ENCODE measurements at regions of chr3 and their contacts with region 1.

Region 1: GRCh38 chr3:179147873-179148615 is at the start of gene PIK3CA:
- DNase-seq: peak; percentile 90
- H3K4me3 Mint-ChIP-seq: peak within 1 kb of the TSS; percentile 93
- H3K27ac Mint-ChIP-seq: peak within 1 kb of the TSS; percentile 97
- H3K4me1 Mint-ChIP-seq: peaks cover 38% of the 10 kb centered on the region
- H3K27me3 Mint-ChIP-seq: peaks cover 23% of the 10 kb centered on the region
- total RNA-seq, gene PIK3CA: 18.9 and 19.7 TPM in 2 replicates

Region 2: GRCh38 chr3:178950676-178951075 is 197.4 kb before region 1 on chr3:
- intact Hi-C with region 1: no loop called
- DNase-seq: no peak
- H3K4me3 Mint-ChIP-seq: no peak overlapping the region
- H3K27ac Mint-ChIP-seq: no peak overlapping the region
- H3K4me1 Mint-ChIP-seq: no peaks in the 10 kb centered on the region
- H3K27me3 Mint-ChIP-seq: no peaks in the 10 kb centered on the region

Region 3: DNA sequence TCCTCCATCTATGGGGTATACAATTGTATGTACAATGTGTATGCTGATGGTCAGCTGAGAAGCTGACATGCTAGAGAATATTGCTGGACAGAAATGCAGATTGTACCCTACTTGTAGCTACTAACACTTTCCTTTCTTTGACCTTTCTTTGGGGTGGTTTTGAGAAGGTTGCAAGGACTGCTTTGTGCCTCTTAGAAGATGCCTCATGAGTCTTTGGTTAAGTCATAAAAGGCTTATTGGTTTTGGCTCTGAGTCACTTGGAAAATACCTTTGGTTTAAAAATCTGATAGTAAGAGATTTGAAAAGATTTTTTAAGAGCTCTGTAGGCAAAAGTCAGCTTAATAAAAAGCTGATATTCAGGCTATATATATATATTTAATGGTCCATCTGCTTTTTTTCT is 147.9 kb before region 1 on chr3:
- intact Hi-C with region 1: loop called (anchors 1 kb)
- DNase-seq: no peak
- H3K4me3 Mint-ChIP-seq: peak overlapping the region; percentile 37
- H3K27ac Mint-ChIP-seq: peak overlapping the region; percentile 45
- H3K4me1 Mint-ChIP-seq: peaks cover 19% of the 10 kb centered on the region
- H3K27me3 Mint-ChIP-seq: peaks cover 11% of the 10 kb centered on the region

Region 4: DNA sequence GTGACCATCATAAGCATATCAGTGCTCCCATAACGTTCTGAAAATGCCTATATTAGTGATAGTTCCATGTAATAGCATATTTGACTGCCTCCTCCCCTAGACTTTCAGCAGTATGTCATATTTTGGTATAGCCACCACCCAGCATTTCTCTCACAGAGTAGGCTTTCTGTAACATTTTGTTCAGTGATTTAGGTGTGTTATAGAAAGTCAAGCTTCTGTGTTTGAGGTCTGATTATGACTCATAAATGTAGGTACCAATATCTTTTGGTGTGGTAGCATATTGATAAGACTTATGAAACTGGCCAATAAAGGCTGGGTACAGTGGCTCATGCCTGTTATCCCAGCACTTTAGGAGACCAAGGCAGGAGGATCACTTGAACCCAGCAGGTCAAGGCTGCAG is 42.2 kb before region 1 on chr3:
- intact Hi-C with region 1: loop called (anchors 1 kb)
- DNase-seq: no peak
- H3K4me3 Mint-ChIP-seq: no peak overlapping the region
- H3K27ac Mint-ChIP-seq: no peak overlapping the region
- H3K4me1 Mint-ChIP-seq: no peaks in the 10 kb centered on the region
- H3K27me3 Mint-ChIP-seq: peaks cover 5% of the 10 kb centered on the region

Region 5: GRCh38 chr3:179133575-179133974 is 14.5 kb before region 1 on chr3:
- intact Hi-C with region 1: no loop called
- DNase-seq: no peak
- H3K4me3 Mint-ChIP-seq: no peak overlapping the region
- H3K27ac Mint-ChIP-seq: no peak overlapping the region
- H3K4me1 Mint-ChIP-seq: peaks cover 4% of the 10 kb centered on the region
- H3K27me3 Mint-ChIP-seq: peaks cover 16% of the 10 kb centered on the region

Region 6: GRCh38 chr3:179196098-179196497 is 48.1 kb after region 1 on chr3:
- intact Hi-C with region 1: loop called (anchors 1 kb)
- DNase-seq: peak; percentile 22
- H3K4me3 Mint-ChIP-seq: no peak overlapping the region
- H3K27ac Mint-ChIP-seq: no peak overlapping the region
- H3K4me1 Mint-ChIP-seq: peaks cover 28% of the 10 kb centered on the region
- H3K27me3 Mint-ChIP-seq: no peaks in the 10 kb centered on the region

Region 7: DNA sequence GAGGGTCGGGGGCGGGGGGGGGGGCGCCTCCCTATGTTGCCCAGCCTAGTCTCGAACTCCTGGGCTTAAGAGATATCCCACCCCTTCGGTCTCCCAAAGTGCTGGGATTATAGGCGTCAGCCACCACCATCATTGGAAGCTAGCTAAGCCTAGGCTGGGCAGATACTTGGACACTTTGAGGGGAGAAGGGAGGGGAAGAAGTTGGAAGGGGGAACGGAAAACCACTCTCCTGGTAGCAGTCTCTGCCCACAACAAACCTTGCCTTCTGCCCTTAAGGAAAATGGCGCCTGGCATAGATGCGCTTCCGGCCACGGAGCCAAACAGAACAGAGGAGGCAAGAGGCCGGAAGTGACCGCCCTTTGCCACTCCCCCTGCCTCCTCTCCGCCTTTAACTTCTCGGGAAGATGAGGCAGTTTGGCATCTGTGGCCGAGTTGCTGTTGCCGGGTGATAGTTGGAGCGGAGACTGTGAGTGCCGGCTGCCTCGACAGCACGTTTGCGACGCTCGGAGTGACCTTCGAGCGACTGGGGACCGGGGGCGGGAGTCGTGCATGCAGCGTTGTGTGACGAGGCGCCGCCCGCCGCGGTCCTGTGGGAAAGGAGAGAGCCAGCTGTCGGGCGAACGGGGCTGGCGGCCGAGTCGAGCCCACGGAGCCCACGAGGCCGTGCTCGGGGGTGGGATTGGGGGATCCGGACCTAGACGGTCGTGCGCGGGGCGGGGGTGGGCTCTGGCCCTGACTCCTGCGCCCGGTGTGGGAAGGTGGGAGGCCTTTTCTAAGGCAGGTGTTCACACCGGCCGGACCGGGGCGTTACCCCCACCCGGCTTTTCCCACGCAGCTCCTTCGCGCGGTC is 199.5 kb after region 1 on chr3 and contains the start of gene MFN1:
- intact Hi-C with region 1: loop called (anchors 1 kb)
- DNase-seq: peak; percentile 87
- H3K4me3 Mint-ChIP-seq: peak within 1 kb of the TSS; percentile 98
- H3K27ac Mint-ChIP-seq: peak within 1 kb of the TSS; percentile 96
- H3K4me1 Mint-ChIP-seq: peaks cover 25% of the 10 kb centered on the region
- H3K27me3 Mint-ChIP-seq: no peaks in the 10 kb centered on the region
- total RNA-seq, gene MFN1: 29.5 and 37.7 TPM in 2 replicates

Region 8: GRCh38 chr3:179653096-179653797 is 505.2 kb after region 1 on chr3:
- intact Hi-C with region 1: loop called (anchors 5 kb)
- DNase-seq: peak; percentile 57
- H3K4me3 Mint-ChIP-seq: peak overlapping the region; percentile 93
- H3K27ac Mint-ChIP-seq: peak overlapping the region; percentile 87
- H3K4me1 Mint-ChIP-seq: peaks cover 27% of the 10 kb centered on the region
- H3K27me3 Mint-ChIP-seq: peaks cover 9% of the 10 kb centered on the region

Measured in activated T-helper 1 cell treated with anti-CD3 and anti-CD28 coated beads, Interleukin-12 subunit alpha, Interleukin-12 subunit beta, Interleukin-2, Interleukin-4 antibody, amounts not matched to agents 30 ng/mL and 10 ng/mL and 1 ng/mL, durations not matched to agents 14 hours and 24 hours and 36 hours (primary cell).